A673 (cell line): ENCODE measurements at regions of chr13 and their contacts with region 1.

Region 1: DNA sequence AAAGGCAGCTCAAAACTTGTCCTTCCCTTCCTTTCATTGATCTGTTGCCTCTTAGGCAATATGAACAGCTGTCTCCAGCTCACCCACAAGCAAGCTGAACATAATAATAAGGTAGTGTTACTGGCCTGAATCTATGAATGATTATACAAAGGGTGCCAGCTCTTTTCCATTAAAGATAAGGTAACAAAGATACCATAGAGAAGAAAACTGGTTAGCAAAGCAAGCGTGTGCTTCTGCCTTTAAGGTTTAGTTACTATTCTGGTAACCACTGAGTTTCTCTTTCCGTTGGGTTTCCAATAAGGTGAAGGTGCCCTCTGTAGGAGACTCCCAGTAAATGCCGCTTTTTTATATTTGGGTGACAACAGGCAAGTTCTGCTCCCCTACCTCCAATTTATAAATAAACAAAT is 12.1 kb upstream of the DACH1 start:
- DNase-seq: peak; percentile 65
- H3K4me3 ChIP-seq: no peak overlapping the region
- H3K27ac ChIP-seq: no peak overlapping the region
- H3K4me1 ChIP-seq: no peaks in the 10 kb centered on the region
- H3K27me3 ChIP-seq: peaks cover 31% of the 10 kb centered on the region
- CTCF ChIP-seq: peak; percentile 76

Region 2: DNA sequence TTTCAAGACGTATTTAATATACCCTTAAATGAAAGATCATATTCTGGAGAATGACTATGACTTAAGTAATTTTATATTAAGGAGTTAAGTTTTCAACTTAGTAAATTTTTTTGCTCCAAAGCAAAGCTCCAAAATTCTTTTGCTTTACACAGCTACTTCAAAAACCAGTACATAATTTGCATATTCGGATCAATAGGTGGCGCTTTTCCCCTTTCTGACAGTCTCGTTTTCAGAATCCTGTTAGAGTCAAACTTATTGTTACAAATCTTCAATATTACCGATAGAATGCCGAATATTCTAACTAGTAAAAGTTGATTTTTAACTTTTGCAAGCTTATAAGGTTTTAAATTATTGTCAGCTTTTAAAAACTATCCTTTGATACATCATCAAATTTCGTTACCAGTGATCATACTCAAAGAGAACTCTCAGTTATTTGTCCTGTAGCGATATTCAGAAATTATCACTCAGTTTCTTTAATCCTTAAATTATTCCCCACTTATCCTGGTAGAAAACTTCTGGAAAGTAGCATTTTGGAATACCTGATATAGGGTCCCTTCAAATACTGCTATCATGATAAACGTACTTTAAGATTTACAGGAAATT is 918.2 kb before region 1 on chr13:
- CTCF ChIA-PET with region 1: no interaction called
- POLR2A ChIA-PET with region 1: no interaction called
- intact Hi-C with region 1: loop called (anchors 5 kb)
- DNase-seq: peak; percentile 44
- H3K4me3 ChIP-seq: no peak overlapping the region
- H3K27ac ChIP-seq: no peak overlapping the region
- H3K4me1 ChIP-seq: no peaks in the 10 kb centered on the region
- H3K27me3 ChIP-seq: peaks cover 22% of the 10 kb centered on the region
- CTCF ChIP-seq: peak; percentile 80

Region 3: GRCh38 chr13:71320452-71320851 is 558.7 kb before region 1 on chr13:
- CTCF ChIA-PET with region 1: no interaction called
- POLR2A ChIA-PET with region 1: no interaction called
- intact Hi-C with region 1: loop called (anchors 1 kb)
- DNase-seq: peak; percentile 58
- H3K4me3 ChIP-seq: no peak overlapping the region
- H3K27ac ChIP-seq: no peak overlapping the region
- H3K4me1 ChIP-seq: no peaks in the 10 kb centered on the region
- H3K27me3 ChIP-seq: peaks cover 10% of the 10 kb centered on the region
- CTCF ChIP-seq: peak; percentile 65

Region 4: GRCh38 chr13:71477735-71478134 is 401.4 kb before region 1 on chr13:
- CTCF ChIA-PET with region 1: no interaction called
- POLR2A ChIA-PET with region 1: no interaction called
- intact Hi-C with region 1: loop called (anchors 5 kb)
- DNase-seq: peak; percentile 19
- H3K4me3 ChIP-seq: no peak overlapping the region
- H3K27ac ChIP-seq: no peak overlapping the region
- H3K4me1 ChIP-seq: no peaks in the 10 kb centered on the region
- H3K27me3 ChIP-seq: no peaks in the 10 kb centered on the region
- CTCF ChIP-seq: peak; percentile 71

Region 5: GRCh38 chr13:71935166-71935840 is 56.2 kb after region 1 on chr13:
- CTCF ChIA-PET with region 1: no interaction called
- POLR2A ChIA-PET with region 1: no interaction called
- intact Hi-C with region 1: no loop called
- DNase-seq: no peak
- H3K4me3 ChIP-seq: no peak overlapping the region
- H3K27ac ChIP-seq: no peak overlapping the region
- H3K4me1 ChIP-seq: no peaks in the 10 kb centered on the region
- H3K27me3 ChIP-seq: peaks cover 12% of the 10 kb centered on the region
- CTCF ChIP-seq: no peak